ENCODE measurements at regions of chr12 and their contacts with region 1.

Region 1: GRCh38 chr12:401235-402028 is at the start of gene CCDC77:
- DNase-seq: peak; percentile 83
- ATAC-seq: peak; percentile 98
- H3K4me3 ChIP-seq: peak within 1 kb of the TSS; percentile 71 to 84
- H3K27ac ChIP-seq: peak within 1 kb of the TSS; percentile 24
- H3K4me1 ChIP-seq: peaks cover 0 to 14% of the 10 kb centered on the region in 2 experiments; a peak in 2 of 4 replicates
- H3K27me3 ChIP-seq: no peaks in the 10 kb centered on the region
- CTCF ChIP-seq: peak in 1 of 3 experiments; percentile 20; a peak in 1 of 6 replicates
- POLR2A ChIP-seq: peak; percentile 82
- RAD21 ChIP-seq: no peak
- total RNA-seq, gene CCDC77: 12.3 TPM

Region 2: GRCh38 chr12:389139-390096 is 12.0 kb before region 1 on chr12 and contains the start of gene KDM5A:
- CTCF ChIA-PET with region 1: interaction called, 3 read pairs
- POLR2A ChIA-PET with region 1: interaction called, 11 read pairs
- RAD21 ChIA-PET with region 1: no interaction called
- intact Hi-C with region 1: no loop called
- DNase-seq: peak; percentile 90
- ATAC-seq: peak; percentile 95
- H3K4me3 ChIP-seq: peak within 1 kb of the TSS; percentile 82 to 98
- H3K27ac ChIP-seq: peak within 1 kb of the TSS; percentile 86
- H3K4me1 ChIP-seq: peaks cover 12 to 21% of the 10 kb centered on the region in 2 experiments; a peak in 3 of 4 replicates
- H3K27me3 ChIP-seq: no peaks in the 10 kb centered on the region
- CTCF ChIP-seq: no peak
- POLR2A ChIP-seq: peak; percentile 64
- RAD21 ChIP-seq: no peak
- total RNA-seq, gene KDM5A: 49.0 TPM

Region 3: GRCh38 chr12:414859-415258 is 13.4 kb after region 1 on chr12:
- CTCF ChIA-PET with region 1: no interaction called
- POLR2A ChIA-PET with region 1: no interaction called
- RAD21 ChIA-PET with region 1: no interaction called
- intact Hi-C with region 1: no loop called
- DNase-seq: no peak
- ATAC-seq: no peak
- H3K4me3 ChIP-seq: no peak overlapping the region
- H3K27ac ChIP-seq: no peak overlapping the region
- H3K4me1 ChIP-seq: no peaks in the 10 kb centered on the region
- H3K27me3 ChIP-seq: no peaks in the 10 kb centered on the region
- CTCF ChIP-seq: no peak
- POLR2A ChIP-seq: no peak
- RAD21 ChIP-seq: no peak

Region 4: DNA sequence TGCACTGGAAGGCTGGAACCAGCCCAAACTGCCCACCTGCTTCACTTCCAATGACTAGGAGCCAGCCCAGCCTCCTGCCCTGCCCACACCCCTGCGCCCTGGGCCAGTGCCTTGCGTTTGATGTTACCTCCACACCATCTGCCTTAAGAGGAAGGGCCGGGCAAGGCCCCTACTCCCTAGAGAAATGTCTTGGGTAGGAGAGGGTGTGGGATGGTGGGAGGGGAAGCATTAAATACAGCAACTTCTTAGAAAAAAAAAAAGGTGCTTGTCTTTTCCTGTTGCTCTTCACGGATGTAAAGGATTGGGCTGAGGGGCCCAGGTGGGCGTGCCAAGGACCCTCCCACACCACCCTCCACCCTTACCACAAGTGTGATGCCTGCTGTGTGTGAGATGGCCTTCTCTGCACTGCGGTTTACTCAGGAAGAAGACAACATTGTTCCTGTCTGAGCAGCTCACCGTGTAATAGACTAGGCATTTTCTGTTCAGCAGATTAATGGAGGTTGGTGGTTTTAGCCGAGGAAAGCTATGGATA is 161.9 kb after region 1 on chr12:
- CTCF ChIA-PET with region 1: no interaction called
- POLR2A ChIA-PET with region 1: no interaction called
- RAD21 ChIA-PET with region 1: no interaction called
- intact Hi-C with region 1: no loop called
- DNase-seq: no peak
- ATAC-seq: no peak
- H3K4me3 ChIP-seq: no peak overlapping the region
- H3K27ac ChIP-seq: no peak overlapping the region
- H3K4me1 ChIP-seq: no peaks in the 10 kb centered on the region
- H3K27me3 ChIP-seq: no peaks in the 10 kb centered on the region
- CTCF ChIP-seq: no peak
- POLR2A ChIP-seq: no peak
- RAD21 ChIP-seq: no peak

Region 5: GRCh38 chr12:685388-685787 is 284.0 kb after region 1 on chr12:
- CTCF ChIA-PET with region 1: no interaction called
- POLR2A ChIA-PET with region 1: no interaction called
- RAD21 ChIA-PET with region 1: no interaction called
- intact Hi-C with region 1: no loop called
- DNase-seq: no peak
- ATAC-seq: no peak
- H3K4me3 ChIP-seq: no peak overlapping the region
- H3K27ac ChIP-seq: no peak overlapping the region
- H3K4me1 ChIP-seq: no peaks in the 10 kb centered on the region
- H3K27me3 ChIP-seq: no peaks in the 10 kb centered on the region
- CTCF ChIP-seq: no peak
- POLR2A ChIP-seq: no peak
- RAD21 ChIP-seq: no peak